ENCODE measurements at regions of chr11 and their contacts with region 1.

Region 1: GRCh38 chr11:116890193-116890592 is 52.8 kb upstream of the APOA1 start:
- DNase-seq: peak; percentile 32
- H3K4me3 Mint-ChIP-seq: no peak overlapping the region
- H3K27ac Mint-ChIP-seq: peak overlapping the region; percentile 71
- H3K4me1 Mint-ChIP-seq: peaks cover 19% of the 10 kb centered on the region
- H3K27me3 Mint-ChIP-seq: no peaks in the 10 kb centered on the region

Region 2: GRCh38 chr11:116762132-116762531 is 128.1 kb before region 1 on chr11:
- CTCF ChIA-PET with region 1: no interaction called
- POLR2A ChIA-PET with region 1: no interaction called
- DNase-seq: no peak
- H3K4me3 Mint-ChIP-seq: no peak overlapping the region
- H3K27ac Mint-ChIP-seq: no peak overlapping the region
- H3K4me1 Mint-ChIP-seq: no peaks in the 10 kb centered on the region
- H3K27me3 Mint-ChIP-seq: no peaks in the 10 kb centered on the region

Region 3: GRCh38 chr11:116879800-116880625 is 10.2 kb before region 1 on chr11:
- CTCF ChIA-PET with region 1: interaction called, 13 read pairs
- POLR2A ChIA-PET with region 1: no interaction called
- DNase-seq: no peak
- H3K4me3 Mint-ChIP-seq: no peak overlapping the region
- H3K27ac Mint-ChIP-seq: peak overlapping the region; percentile 6
- H3K4me1 Mint-ChIP-seq: peaks cover 17% of the 10 kb centered on the region
- H3K27me3 Mint-ChIP-seq: no peaks in the 10 kb centered on the region

Region 4: DNA sequence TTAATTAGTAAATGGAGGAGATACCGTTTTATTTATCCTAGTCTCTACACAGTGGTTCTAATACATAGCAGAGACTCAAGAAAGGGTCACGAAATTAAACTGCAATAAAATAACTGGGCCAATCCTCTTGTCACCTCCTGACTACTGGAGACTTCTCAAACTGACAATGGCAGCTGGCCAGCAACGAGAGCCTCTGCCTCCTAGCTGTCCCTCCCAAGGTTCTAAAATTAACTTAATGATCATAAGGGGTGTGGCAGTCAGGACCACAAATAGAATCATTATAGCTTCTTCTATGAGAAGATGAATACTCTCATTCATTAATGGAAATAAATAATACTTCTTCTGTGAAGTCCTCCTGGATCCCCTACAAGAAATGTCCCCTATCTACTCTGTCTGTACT is 11.0 kb after region 1 on chr11:
- CTCF ChIA-PET with region 1: no interaction called
- POLR2A ChIA-PET with region 1: no interaction called
- DNase-seq: no peak
- H3K4me3 Mint-ChIP-seq: no peak overlapping the region
- H3K27ac Mint-ChIP-seq: no peak overlapping the region
- H3K4me1 Mint-ChIP-seq: peaks cover 2% of the 10 kb centered on the region
- H3K27me3 Mint-ChIP-seq: no peaks in the 10 kb centered on the region

Region 5: GRCh38 chr11:116927163-116927974 is 37.2 kb after region 1 on chr11:
- CTCF ChIA-PET with region 1: no interaction called
- POLR2A ChIA-PET with region 1: interaction called, 10 read pairs
- DNase-seq: peak; percentile 61
- H3K4me3 Mint-ChIP-seq: peak overlapping the region; percentile 36
- H3K27ac Mint-ChIP-seq: peak overlapping the region; percentile 86
- H3K4me1 Mint-ChIP-seq: peaks cover 81% of the 10 kb centered on the region
- H3K27me3 Mint-ChIP-seq: no peaks in the 10 kb centered on the region